ENCODE measurements at regions of chr12 and their contacts with region 1.

Region 1: GRCh38 chr12:59149997-59150642 is 229.8 kb upstream of the LRIG3 start:
- DNase-seq: peak; percentile 91
- ATAC-seq: peak; percentile 92
- H3K4me3 ChIP-seq: no peak overlapping the region
- H3K27ac ChIP-seq: no peak overlapping the region
- H3K4me1 ChIP-seq: no peaks in the 10 kb centered on the region
- H3K27me3 ChIP-seq: no peaks in the 10 kb centered on the region
- CTCF ChIP-seq: peak; percentile 99

Region 2: GRCh38 chr12:57983146-57983857 is 1166.8 kb before region 1 on chr12:
- CTCF ChIA-PET with region 1: interaction called, 3 read pairs
- POLR2A ChIA-PET with region 1: no interaction called
- intact Hi-C with region 1: loop called (anchors 2 kb)
- DNase-seq: peak; percentile 73
- ATAC-seq: no peak
- H3K4me3 ChIP-seq: no peak overlapping the region
- H3K27ac ChIP-seq: no peak overlapping the region
- H3K4me1 ChIP-seq: peaks cover 12% of the 10 kb centered on the region; the same call in 1 of the 2 replicates
- H3K27me3 ChIP-seq: no peaks in the 10 kb centered on the region
- CTCF ChIP-seq: peak; percentile 78

Region 3: DNA sequence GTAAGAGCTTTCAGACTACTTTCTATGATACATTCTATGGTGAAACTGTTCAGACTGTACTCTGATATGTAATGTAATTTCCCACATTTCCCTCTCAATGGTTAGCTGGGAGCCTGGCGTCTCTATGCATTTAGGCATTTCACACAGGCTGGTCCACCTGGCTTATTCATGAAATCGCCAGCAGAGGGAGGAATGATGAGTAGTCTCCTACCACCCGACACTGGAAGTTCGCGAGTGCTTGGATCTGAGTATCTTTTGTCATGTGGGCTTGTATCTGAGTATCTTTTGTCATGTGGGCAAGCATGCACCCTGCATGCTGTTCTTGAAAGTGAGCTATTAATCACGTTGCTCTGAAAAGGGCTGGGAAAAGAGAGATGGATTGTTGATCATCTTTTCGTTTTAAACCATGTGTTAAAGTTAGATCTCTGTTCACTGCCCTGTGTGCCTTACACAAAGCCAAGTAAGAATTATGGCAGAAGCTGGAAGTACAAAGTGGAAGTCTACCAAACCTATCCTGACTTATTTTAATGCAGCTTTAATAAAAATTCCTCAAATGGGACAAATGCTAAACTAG is 973.7 kb before region 1 on chr12:
- CTCF ChIA-PET with region 1: no interaction called
- POLR2A ChIA-PET with region 1: no interaction called
- intact Hi-C with region 1: loop called (anchors 5 kb)
- DNase-seq: peak; percentile 85
- ATAC-seq: peak; percentile 96
- H3K4me3 ChIP-seq: no peak overlapping the region
- H3K27ac ChIP-seq: no peak overlapping the region
- H3K4me1 ChIP-seq: no peaks in the 10 kb centered on the region
- H3K27me3 ChIP-seq: no peaks in the 10 kb centered on the region
- CTCF ChIP-seq: peak; percentile 82

Region 4: GRCh38 chr12:58540480-58541299 is 609.4 kb before region 1 on chr12:
- CTCF ChIA-PET with region 1: interaction called, 4 read pairs
- POLR2A ChIA-PET with region 1: no interaction called
- intact Hi-C with region 1: loop called (anchors 1 kb)
- DNase-seq: peak; percentile 92
- ATAC-seq: peak; percentile 98
- H3K4me3 ChIP-seq: no peak overlapping the region
- H3K27ac ChIP-seq: peak overlapping the region; percentile 3; the same call in 1 of the 2 replicates
- H3K4me1 ChIP-seq: peaks cover 33% of the 10 kb centered on the region
- H3K27me3 ChIP-seq: no peaks in the 10 kb centered on the region
- CTCF ChIP-seq: peak; percentile 94

Region 5: DNA sequence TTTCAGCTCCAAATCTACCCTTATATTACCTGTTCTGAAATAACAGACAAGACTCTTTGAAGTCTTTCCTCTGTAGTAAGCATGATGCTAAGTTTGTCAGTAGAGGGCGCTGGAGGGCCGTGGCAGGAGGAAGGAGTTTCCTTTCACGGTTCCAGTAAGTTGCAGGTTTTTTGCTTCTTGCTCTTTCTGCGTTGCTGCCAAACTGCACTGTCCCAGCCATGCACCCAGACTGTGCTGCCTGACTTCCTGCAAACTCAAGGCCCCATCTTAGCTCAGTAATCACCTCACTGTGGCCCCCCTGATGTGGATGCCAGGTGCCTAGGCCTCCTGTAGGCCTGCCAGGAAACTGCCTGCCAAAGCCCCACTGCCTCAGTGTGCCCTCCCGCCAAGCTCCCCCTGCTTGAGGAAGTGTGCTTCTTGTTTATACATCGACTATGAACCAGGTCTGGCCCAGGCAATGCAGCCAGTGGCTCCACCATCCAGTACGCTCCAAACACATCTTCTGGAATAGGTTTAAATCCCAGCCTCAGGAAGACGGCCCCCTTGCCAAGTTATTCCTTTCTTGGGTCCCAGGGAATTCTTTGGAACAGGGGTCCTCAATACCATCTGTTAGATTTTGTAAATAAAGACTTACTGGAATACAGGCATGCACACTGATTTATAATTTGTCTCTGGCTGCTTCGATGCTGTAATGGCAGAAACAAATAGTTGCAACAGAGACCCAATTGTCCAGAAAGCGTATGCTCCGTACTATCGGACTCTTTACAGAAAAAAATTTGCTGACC is 36.1 kb before region 1 on chr12:
- CTCF ChIA-PET with region 1: interaction called, 5 read pairs
- POLR2A ChIA-PET with region 1: interaction called, 3 read pairs
- intact Hi-C with region 1: loop called (anchors 1 kb)
- DNase-seq: peak; percentile 84
- ATAC-seq: peak; percentile 94
- H3K4me3 ChIP-seq: no peak overlapping the region
- H3K27ac ChIP-seq: no peak overlapping the region
- H3K4me1 ChIP-seq: 0 out of 2 replicates have a peak, but pooled peaks cover 8% of the 10 kb centered on the region
- H3K27me3 ChIP-seq: no peaks in the 10 kb centered on the region
- CTCF ChIP-seq: peak; percentile 94

Region 6: DNA sequence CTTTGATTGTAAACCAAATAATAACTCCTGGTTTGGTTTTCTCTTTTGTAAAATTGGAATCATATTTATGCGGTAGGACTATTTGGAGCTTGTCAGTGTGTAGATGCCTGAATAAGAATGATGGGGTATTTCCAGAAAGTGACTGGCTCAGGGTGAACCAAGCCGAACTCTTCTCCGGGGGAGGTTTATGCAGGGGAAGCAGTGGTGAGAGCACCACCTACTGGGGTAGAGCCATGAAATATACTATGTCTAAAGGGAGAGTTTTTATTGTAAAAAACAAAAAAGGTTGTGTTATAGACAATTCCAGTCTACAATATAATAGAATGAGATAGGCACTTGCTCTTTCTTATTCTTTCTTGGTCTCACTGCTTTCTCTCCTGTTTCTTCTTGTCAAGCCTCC is 222.8 kb after region 1 on chr12:
- CTCF ChIA-PET with region 1: no interaction called
- POLR2A ChIA-PET with region 1: no interaction called
- intact Hi-C with region 1: no loop called
- DNase-seq: peak; percentile 52
- ATAC-seq: peak; percentile 81
- H3K4me3 ChIP-seq: no peak overlapping the region
- H3K27ac ChIP-seq: no peak overlapping the region
- H3K4me1 ChIP-seq: peaks cover 7% of the 10 kb centered on the region; the same call in 1 of the 2 replicates
- H3K27me3 ChIP-seq: no peaks in the 10 kb centered on the region
- CTCF ChIP-seq: peak; percentile 69

Measured in PC-3 (cell line).